Activated CD4-positive, alpha-beta T cell treated with anti-CD3 and anti-CD28 coated beads, Interleukin-2, amount 10 ng/mL, durations not matched to agents 7 days and 5 days (primary cell): ENCODE measurements at regions of chr5 and their contacts with region 1.

Region 1: GRCh38 chr5:139517683-139518564 is 35.4 kb upstream of the STING1 start:
- DNase-seq: peak; percentile 88
- H3K4me3 Mint-ChIP-seq: peak overlapping the region; percentile 76
- H3K27ac Mint-ChIP-seq: peak overlapping the region; percentile 89
- H3K4me1 Mint-ChIP-seq: peaks cover 28% of the 10 kb centered on the region
- H3K27me3 Mint-ChIP-seq: peaks cover 1% of the 10 kb centered on the region

Region 2: DNA sequence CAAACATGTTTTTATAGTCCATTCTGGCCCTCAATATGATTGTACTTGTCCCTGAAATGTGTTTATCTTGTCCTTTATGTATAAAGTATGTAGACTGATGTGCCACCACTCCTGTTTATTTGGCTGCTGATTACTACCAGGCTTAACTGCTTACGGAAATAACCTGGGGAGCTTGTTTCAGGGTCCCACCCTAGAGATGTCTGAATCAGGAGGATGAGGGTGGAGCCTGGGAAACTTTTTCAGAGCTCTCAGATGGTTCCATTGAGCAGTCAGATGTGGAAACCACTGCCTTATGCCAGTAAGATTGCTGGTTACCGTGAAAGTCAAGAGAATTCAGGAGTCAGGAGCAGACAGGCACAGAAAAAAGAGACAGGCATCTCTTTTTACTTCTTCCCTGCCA is 154.0 kb before region 1 on chr5:
- CTCF ChIA-PET with region 1: no interaction called
- POLR2A ChIA-PET with region 1: no interaction called
- DNase-seq: no peak
- H3K4me3 Mint-ChIP-seq: no peak overlapping the region
- H3K27ac Mint-ChIP-seq: no peak overlapping the region
- H3K4me1 Mint-ChIP-seq: peaks cover 2% of the 10 kb centered on the region
- H3K27me3 Mint-ChIP-seq: no peaks in the 10 kb centered on the region

Region 3: DNA sequence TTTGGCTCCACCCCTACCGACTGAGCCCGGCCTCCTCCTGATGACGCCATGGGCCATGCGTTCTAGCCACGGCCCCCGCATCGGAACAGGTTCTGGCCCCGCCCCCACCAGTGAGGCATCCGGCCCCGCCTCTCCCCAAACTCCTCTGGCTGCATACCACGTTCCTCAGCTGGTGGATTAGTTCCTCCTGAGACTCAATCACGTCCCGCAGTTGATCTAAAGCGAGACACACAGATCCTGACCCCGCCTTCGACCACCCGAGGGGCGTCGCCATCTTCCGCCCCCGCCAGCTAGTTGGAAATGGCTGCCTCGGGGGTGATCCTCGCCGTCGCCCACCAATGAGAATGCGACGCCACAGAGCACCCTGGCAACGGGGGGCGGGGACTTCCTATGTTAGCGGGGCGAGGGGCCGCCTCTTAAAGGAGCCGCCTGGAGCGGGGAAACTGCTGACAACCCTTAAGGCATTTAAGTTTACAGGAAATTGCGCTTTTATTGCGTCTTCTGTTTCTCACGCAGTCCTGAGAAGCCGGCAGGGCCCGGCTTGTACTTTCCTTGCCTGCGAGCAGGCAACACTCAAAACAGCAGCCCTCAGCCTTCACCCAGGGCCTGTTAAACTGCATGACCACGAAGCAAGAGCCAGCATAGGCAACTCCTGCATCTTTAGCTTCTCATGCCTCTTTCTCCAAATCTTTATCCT is 114.0 kb before region 1 on chr5 and contains the start of gene SPATA24:
- CTCF ChIA-PET with region 1: interaction called, 10 read pairs
- POLR2A ChIA-PET with region 1: no interaction called
- DNase-seq: peak; percentile 99
- H3K4me3 Mint-ChIP-seq: peak within 1 kb of the TSS; percentile 92
- H3K27ac Mint-ChIP-seq: peak within 1 kb of the TSS; percentile 100
- H3K4me1 Mint-ChIP-seq: peaks cover 47% of the 10 kb centered on the region
- H3K27me3 Mint-ChIP-seq: no peaks in the 10 kb centered on the region
- total RNA-seq, gene SPATA24: 5.5 to 7.2 TPM

Region 4: DNA sequence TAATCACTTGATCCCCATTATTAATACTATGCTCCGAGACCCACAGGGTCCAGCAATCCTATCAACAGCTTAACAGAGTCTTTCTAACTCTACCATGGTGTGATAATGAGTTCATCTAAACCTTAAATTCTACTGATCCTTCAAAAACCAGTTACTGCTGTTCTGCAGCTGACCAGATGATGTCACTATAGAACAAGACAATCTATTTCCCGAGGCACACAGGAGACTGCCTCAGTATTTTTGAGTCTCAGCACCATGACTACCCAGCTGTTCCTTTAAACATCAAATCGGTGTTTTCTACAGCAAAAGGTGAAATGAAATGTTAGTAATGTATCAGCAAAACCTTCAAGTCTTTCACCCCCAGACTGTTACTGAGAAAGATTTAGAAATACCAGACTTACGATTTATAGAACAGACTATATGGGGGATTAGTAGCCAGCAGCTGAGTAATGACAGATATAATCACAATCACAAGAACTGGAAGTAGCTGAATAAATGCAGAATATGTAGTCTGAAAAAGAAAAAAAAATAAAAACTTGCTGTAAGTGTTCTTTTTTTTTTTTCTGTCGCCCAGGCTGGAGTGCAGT is 95.5 kb before region 1 on chr5:
- CTCF ChIA-PET with region 1: interaction called, 170 read pairs
- POLR2A ChIA-PET with region 1: no interaction called
- DNase-seq: peak; percentile 77
- H3K4me3 Mint-ChIP-seq: no peak overlapping the region
- H3K27ac Mint-ChIP-seq: no peak overlapping the region
- H3K4me1 Mint-ChIP-seq: peaks cover 26% of the 10 kb centered on the region
- H3K27me3 Mint-ChIP-seq: no peaks in the 10 kb centered on the region

Region 5: GRCh38 chr5:139482050-139482889 is 35.7 kb before region 1 on chr5 and contains the start of gene STING1:
- CTCF ChIA-PET with region 1: interaction called, 33 read pairs
- POLR2A ChIA-PET with region 1: no interaction called
- DNase-seq: peak; percentile 73
- H3K4me3 Mint-ChIP-seq: peak within 1 kb of the TSS; percentile 82
- H3K27ac Mint-ChIP-seq: peak within 1 kb of the TSS; percentile 95
- H3K4me1 Mint-ChIP-seq: peaks cover 43% of the 10 kb centered on the region
- H3K27me3 Mint-ChIP-seq: no peaks in the 10 kb centered on the region
- total RNA-seq, gene STING1: 175 TPM

Region 6: GRCh38 chr5:139501381-139501780 is 16.5 kb before region 1 on chr5:
- CTCF ChIA-PET with region 1: interaction called, 30 read pairs
- POLR2A ChIA-PET with region 1: no interaction called
- DNase-seq: no peak
- H3K4me3 Mint-ChIP-seq: no peak overlapping the region
- H3K27ac Mint-ChIP-seq: no peak overlapping the region
- H3K4me1 Mint-ChIP-seq: no peaks in the 10 kb centered on the region
- H3K27me3 Mint-ChIP-seq: peaks cover 5% of the 10 kb centered on the region